ENCODE measurements at regions of chr2 and their contacts with region 1.

Region 1: DNA sequence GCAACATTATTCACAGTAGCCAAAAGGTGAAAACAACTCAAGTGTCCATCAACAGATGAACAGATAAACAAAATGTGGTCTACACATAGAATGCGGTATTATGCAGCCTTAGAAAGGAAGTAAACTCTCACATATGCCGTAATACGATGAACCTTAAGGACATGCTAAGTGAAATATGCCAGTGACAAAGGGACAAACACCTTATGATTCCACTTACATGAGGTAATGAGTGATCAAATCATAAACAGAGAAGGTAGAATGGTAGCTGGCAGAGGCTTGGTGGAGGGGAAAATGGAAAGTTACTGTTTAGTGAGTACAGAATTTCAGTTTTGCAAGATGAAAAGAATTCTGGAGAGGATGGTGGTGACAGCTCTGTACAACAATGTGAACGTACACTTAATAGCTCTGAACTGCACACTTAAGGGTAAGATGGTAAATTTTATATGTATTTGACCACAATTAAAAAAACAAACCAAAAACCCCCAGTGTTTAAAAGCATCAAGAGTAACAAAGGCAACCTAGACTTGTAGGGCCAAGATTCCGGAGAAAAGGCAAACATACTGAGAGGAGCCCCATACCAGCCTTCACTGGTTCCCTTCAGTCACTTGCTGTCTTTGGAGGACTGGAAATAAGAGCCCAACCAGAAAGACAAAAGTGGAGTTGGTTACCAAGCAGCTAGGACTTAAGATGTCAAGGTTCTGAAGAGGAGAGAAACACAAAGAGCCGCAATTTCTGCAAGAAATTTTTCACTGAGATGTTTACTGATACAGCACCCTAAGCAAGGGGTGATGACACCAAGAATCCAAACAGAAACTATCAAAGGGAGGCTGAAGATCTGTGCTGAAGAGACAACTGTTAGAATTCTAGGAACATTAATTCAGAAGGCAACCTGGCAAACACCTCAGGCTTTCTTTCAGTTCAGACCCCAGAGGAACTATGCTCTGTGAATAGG is 61.3 kb downstream of the CUL3 start:
- DNase-seq: peak in 3 of 14 experiments; percentile 38 to 46 (median 40)
- ATAC-seq: peak; percentile 65
- H3K4me3 ChIP-seq: peak overlapping the region; percentile 4
- H3K4me3 Mint-ChIP-seq: peak overlapping the region; percentile 72
- H3K27ac ChIP-seq: peak overlapping the region; percentile 24 to 47
- H3K27ac Mint-ChIP-seq: peak overlapping the region; percentile 72
- H3K4me1 ChIP-seq: peaks cover 20% of the 10 kb centered on the region
- H3K4me1 Mint-ChIP-seq: peaks cover 82% of the 10 kb centered on the region
- H3K27me3 ChIP-seq: no peaks in the 10 kb centered on the region
- H3K27me3 Mint-ChIP-seq: no peaks in the 10 kb centered on the region
- CTCF ChIP-seq: no peak

Region 2: DNA sequence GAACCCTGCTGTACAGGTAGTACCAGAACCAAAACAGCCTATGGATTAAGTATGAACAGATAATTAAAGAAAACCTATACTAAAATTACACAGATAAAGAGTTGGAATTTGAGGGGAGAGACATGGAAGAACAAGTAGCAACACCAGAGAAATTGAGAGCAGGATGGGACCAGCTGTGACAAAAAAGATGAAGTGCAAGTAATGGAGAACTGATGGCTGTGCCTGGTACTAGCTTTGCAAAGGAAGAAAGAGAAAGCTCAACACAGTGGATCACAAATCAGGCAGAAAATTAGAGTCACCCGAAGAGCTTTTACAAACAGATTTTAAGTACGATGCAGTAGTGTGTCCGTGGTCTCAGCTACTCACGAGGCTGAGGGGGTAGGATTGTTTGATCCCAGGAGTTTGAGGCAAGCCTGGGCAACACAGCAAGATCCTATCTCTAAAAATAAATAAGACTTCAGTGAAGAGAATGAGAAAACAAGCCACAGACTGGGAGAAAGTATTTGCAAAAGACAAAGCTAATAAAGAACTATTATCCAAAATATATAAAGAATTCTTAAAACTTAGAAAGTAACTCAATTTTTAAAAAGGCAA is 14.8 kb after region 1 on chr2:
- CTCF ChIA-PET with region 1: interaction called, 3 read pairs
- POLR2A ChIA-PET with region 1: no interaction called
- intact Hi-C with region 1: loop called in 1 of 2 experiments (anchors 2 kb)
- DNase-seq: no peak
- ATAC-seq: no peak
- H3K4me3 ChIP-seq: no peak overlapping the region
- H3K4me3 Mint-ChIP-seq: no peak overlapping the region
- H3K27ac ChIP-seq: no peak overlapping the region
- H3K27ac Mint-ChIP-seq: no peak overlapping the region
- H3K4me1 ChIP-seq: peaks cover 3% of the 10 kb centered on the region
- H3K4me1 Mint-ChIP-seq: peaks cover 58% of the 10 kb centered on the region
- H3K27me3 ChIP-seq: no peaks in the 10 kb centered on the region
- H3K27me3 Mint-ChIP-seq: no peaks in the 10 kb centered on the region
- CTCF ChIP-seq: no peak

Region 3: GRCh38 chr2:224640679-224641078 is 116.8 kb after region 1 on chr2:
- CTCF ChIA-PET with region 1: no interaction called
- POLR2A ChIA-PET with region 1: no interaction called
- intact Hi-C with region 1: loop called in 1 of 2 experiments (anchors 5 kb)
- DNase-seq: no peak
- ATAC-seq: no peak
- H3K4me3 ChIP-seq: no peak overlapping the region
- H3K4me3 Mint-ChIP-seq: no peak overlapping the region
- H3K27ac ChIP-seq: no peak overlapping the region
- H3K27ac Mint-ChIP-seq: no peak overlapping the region
- H3K4me1 ChIP-seq: peaks cover 10% of the 10 kb centered on the region
- H3K4me1 Mint-ChIP-seq: peaks cover 15% of the 10 kb centered on the region
- H3K27me3 ChIP-seq: no peaks in the 10 kb centered on the region
- H3K27me3 Mint-ChIP-seq: no peaks in the 10 kb centered on the region
- CTCF ChIP-seq: no peak

Measured in CD4-positive, alpha-beta T cell (primary cell).